ENCODE measurements at regions of chr11 and their contacts with region 1.

Region 1: GRCh38 chr11:18203723-18204122 is 31.1 kb downstream of the MRGPRX4 start:
- DNase-seq: peak; percentile 64
- CTCF ChIP-seq: peak; percentile 31

Region 2: GRCh38 chr11:17906436-17906835 is 297.3 kb before region 1 on chr11:
- CTCF ChIA-PET with region 1: no interaction called
- POLR2A ChIA-PET with region 1: no interaction called
- DNase-seq: no peak
- CTCF ChIP-seq: peak; percentile 15

Region 3: DNA sequence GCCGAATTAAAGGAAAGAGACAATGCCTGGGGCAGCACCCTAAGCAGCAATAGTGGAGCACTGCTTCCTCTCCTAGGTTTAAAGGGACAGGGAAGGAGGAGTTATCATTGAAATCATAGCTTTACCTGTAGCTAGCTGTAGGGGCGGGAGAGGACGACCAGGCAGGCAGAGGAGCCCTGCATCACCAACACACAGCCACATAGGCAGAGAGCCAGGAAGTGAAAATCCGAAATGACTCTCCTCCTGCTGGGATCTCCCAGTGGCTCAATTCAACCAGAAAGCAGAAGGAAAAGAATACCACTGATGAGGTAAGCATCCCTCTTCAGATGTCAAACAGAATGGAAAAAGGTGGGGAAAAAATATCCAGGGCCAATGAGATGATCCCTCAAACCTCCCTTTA is 10.7 kb before region 1 on chr11:
- CTCF ChIA-PET with region 1: interaction called, 11 read pairs
- POLR2A ChIA-PET with region 1: no interaction called
- DNase-seq: peak; percentile 34
- CTCF ChIP-seq: no peak

Region 4: GRCh38 chr11:18540207-18541009 is 336.7 kb after region 1 on chr11:
- CTCF ChIA-PET with region 1: no interaction called
- POLR2A ChIA-PET with region 1: no interaction called
- DNase-seq: peak; percentile 40
- CTCF ChIP-seq: peak; percentile 36

Measured in GM10248 (cell line).